GM12878 (cell line): ENCODE measurements at regions of chr18 and their contacts with region 1.

Region 1: DNA sequence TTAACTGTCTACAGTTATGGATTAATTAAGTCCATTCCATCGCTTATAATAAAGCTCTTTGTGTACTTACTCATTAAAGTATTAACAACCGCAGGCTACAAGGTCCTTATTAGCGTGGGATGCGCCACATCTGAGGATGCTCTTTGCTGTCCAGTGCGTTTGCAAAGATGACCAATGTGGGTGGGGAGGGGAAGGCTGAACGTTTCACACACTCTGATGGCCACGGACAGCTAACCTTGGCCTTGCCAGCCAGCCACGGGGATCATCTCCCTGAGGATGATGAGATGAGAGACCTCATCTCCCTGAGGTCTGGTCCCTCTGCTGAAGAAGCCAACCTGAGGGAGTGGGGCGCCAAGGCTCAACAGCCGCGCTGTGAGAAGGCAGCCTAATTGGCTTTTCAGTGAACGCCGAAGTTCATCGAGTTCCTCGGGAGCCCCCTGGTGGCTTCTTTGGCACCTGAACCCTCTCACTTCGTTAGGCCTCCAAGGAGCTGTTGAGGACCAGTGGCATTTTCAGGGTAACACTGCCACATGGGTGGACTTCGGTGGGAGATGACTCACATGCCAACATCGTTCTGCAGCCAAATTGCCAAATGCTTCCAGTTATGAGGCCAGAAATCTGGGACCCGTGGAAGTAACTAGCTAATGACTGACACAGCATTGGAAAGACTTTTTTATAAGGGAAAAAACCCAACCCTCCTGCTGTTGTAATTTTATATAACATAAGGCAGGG is 69.3 kb upstream of the SEC11C start:
- DNase-seq: no peak
- ATAC-seq: peak; percentile 99
- H3K4me3 ChIP-seq: no peak overlapping the region
- H3K27ac ChIP-seq: no peak overlapping the region
- H3K4me1 ChIP-seq: peaks cover 7% of the 10 kb centered on the region
- H3K27me3 ChIP-seq: no peaks in the 10 kb centered on the region
- CTCF ChIP-seq: peak; percentile 81 to 91 (median 91)
- EP300 ChIP-seq: no peak
- POLR2A ChIP-seq: no peak
- RAD21 ChIP-seq: peak; percentile 84

Region 2: DNA sequence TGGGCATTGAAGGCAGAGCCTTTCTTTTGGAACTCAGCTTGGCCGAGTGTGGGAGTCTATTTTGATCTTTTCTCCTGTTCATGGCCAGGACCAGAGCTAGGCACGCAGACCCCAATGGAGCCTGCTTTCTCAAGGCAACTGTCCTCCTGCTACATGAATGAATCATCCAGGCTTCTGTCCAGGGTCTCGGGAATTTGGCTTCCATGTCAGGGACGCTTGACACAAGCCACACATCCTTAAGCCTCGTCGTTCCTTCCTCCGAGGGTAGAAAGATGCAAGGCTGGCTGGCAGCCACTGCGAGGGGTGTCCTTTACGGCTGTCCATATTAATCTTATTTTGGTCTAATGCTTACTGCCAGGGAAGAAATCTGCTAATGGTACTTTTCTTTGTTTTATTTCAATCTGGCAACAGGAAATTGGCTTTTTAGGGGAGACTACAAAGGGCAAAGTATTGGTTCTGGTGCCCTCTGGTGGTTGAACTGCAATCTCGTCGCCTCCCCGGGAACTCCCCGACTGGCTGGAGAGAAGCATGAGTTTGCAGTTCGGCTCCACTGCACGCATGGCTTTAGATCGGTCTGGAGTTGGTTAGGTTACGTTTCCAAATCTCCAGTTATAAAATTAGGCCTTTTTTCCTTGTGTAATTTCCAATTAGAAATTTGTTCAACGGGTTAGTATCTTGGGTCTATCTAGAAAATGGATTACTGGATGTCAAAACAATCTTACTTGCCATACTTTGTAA is 576.7 kb before region 1 on chr18:
- CTCF ChIA-PET with region 1: interaction called, 4 read pairs
- POLR2A ChIA-PET with region 1: no interaction called
- RAD21 ChIA-PET with region 1: no interaction called
- SMC1A ChIA-PET with region 1: no interaction called
- in situ Hi-C with region 1: loop called (anchors 25 kb)
- intact Hi-C with region 1: no loop called
- DNase-seq: peak; percentile 28
- ATAC-seq: peak; percentile 94
- H3K4me3 ChIP-seq: no peak overlapping the region
- H3K27ac ChIP-seq: no peak overlapping the region
- H3K4me1 ChIP-seq: peaks cover 13% of the 10 kb centered on the region
- H3K27me3 ChIP-seq: no peaks in the 10 kb centered on the region
- CTCF ChIP-seq: peak; percentile 75 to 90 (median 85)
- EP300 ChIP-seq: no peak
- POLR2A ChIP-seq: no peak
- RAD21 ChIP-seq: peak; percentile 81

Region 3: DNA sequence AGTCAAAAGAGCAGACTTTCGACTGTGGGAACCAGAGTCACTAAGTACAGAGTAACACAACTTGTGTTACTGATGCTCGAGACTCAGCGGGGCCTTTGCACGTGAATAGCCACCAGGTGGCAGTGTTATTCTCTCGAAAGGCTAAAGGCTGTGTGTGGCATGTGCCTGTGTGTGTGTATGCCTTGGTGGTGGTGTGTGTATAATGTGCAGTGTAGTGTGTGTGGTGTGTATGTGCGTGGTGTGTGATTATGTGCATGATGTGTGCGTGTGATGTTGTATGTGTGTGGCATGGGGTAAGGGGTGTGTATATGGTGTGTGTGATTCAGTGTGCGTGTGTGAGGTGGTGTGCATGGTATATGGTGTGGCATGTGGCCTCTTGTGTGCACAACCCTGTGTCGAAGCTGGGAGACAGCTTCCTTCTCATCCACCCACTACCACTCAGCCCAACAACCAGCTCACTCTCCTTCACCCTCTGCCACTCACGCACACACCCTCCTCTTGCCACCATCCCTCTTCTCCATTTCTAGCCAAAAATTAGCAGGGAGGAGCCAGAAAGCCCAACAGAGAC is 288.6 kb before region 1 on chr18:
- CTCF ChIA-PET with region 1: interaction called, 265 read pairs
- POLR2A ChIA-PET with region 1: no interaction called
- RAD21 ChIA-PET with region 1: interaction called, 12 read pairs
- SMC1A ChIA-PET with region 1: interaction called, 71 read pairs
- in situ Hi-C with region 1: no loop called
- intact Hi-C with region 1: loop called (anchors 1 kb)
- DNase-seq: peak; percentile 57
- ATAC-seq: peak; percentile 99
- H3K4me3 ChIP-seq: no peak overlapping the region
- H3K27ac ChIP-seq: no peak overlapping the region
- H3K4me1 ChIP-seq: no peaks in the 10 kb centered on the region
- H3K27me3 ChIP-seq: no peaks in the 10 kb centered on the region
- CTCF ChIP-seq: peak; percentile 80 to 91 (median 83)
- EP300 ChIP-seq: no peak
- POLR2A ChIP-seq: no peak
- RAD21 ChIP-seq: peak; percentile 93

Region 4: DNA sequence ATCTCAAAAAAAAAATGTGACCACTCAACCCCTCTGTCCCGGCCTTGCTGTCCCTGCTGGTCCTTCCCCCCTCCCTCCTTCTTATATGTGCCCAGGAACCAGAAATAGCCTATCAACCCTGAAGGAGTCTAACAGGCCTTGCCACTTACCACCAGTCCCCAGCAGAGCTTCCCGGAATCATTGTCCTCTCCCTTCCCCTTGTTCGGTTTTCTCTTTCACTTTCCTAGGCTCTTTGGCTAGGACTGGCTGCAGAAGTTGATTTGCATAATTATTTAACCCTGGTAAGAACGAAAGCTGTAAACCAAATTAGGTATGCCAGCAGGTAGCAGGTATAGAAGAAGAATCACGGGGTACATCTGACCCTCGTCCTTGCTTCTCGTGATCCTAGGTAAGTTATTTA is 278.3 kb before region 1 on chr18:
- CTCF ChIA-PET with region 1: interaction called, 89 read pairs
- POLR2A ChIA-PET with region 1: no interaction called
- RAD21 ChIA-PET with region 1: no interaction called
- SMC1A ChIA-PET with region 1: interaction called, 4 read pairs
- in situ Hi-C with region 1: no loop called
- intact Hi-C with region 1: no loop called
- DNase-seq: peak; percentile 57
- ATAC-seq: peak; percentile 90
- H3K4me3 ChIP-seq: no peak overlapping the region
- H3K27ac ChIP-seq: no peak overlapping the region; the same call in 1 of the 2 replicates
- H3K4me1 ChIP-seq: peaks cover 7% of the 10 kb centered on the region
- H3K27me3 ChIP-seq: no peaks in the 10 kb centered on the region
- CTCF ChIP-seq: no peak
- EP300 ChIP-seq: no peak
- POLR2A ChIP-seq: no peak
- RAD21 ChIP-seq: no peak

Region 5: DNA sequence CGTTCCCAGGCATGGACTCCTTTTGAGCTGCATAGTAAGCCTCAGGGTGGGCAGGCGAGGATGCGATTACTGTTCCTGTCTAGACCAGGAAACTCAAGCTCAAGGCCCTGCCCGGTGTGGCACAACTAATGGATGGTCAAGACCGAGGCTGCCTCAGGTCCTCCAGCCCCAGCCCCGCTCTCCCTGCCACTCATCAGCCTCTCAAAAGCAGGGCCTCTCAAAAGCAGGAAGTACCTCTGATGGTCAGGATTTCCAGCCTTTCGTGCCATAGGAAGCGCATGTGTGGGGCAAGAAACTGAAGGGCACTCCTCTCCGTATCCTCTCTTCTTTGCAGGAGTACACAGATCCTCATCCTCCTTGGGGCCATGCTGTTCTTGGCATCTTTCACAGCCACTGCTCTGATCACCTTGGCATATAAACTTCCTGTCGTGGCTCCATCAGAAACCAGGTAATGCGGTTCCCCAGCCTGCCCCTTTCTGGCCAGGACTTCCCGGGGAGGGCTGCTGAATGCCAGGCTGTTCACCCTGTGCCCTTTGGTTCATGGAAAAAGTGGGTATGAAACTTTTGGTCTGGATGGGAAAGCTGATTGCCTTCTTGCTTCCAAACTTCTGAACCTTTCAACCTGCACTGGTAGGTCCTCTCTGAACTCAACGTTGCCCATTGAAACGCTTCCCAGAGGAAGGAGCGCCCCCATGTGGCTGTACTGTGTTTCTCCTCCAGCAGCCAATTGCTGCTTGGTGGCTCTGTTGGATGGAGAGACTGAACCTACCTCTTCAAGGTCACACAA is 13.4 kb before region 1 on chr18:
- CTCF ChIA-PET with region 1: interaction called, 20 read pairs
- POLR2A ChIA-PET with region 1: no interaction called
- RAD21 ChIA-PET with region 1: interaction called, 10 read pairs
- SMC1A ChIA-PET with region 1: interaction called, 6 read pairs
- in situ Hi-C with region 1: no loop called
- intact Hi-C with region 1: no loop called
- DNase-seq: no peak
- ATAC-seq: peak; percentile 98
- H3K4me3 ChIP-seq: no peak overlapping the region
- H3K27ac ChIP-seq: no peak overlapping the region
- H3K4me1 ChIP-seq: no peaks in the 10 kb centered on the region; the same call in 1 of the 2 replicates
- H3K27me3 ChIP-seq: no peaks in the 10 kb centered on the region; a peak in 1 of 4 replicates
- CTCF ChIP-seq: peak; percentile 81 to 92 (median 91)
- EP300 ChIP-seq: no peak
- POLR2A ChIP-seq: no peak
- RAD21 ChIP-seq: peak; percentile 96

Region 6: DNA sequence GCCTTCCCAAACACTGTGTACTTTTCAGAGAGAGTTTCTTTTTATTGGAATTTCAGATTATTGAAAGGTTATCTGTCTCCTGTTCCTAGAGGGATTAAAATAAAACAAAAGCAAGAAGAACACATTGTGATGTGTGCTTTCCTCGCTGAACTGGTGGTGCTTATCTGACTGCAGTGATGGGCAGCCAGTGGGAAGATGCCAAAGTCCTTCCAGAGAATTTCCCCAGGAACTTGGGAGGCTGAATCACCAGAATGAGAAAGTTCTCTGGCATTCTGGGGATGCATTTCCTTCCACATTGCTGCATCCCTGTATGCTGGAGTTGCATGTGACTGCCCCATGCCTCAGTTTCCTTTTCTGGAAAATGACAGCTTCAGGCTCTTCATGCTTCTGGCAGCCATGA is 15.4 kb after region 1 on chr18:
- CTCF ChIA-PET with region 1: interaction called, 47 read pairs
- POLR2A ChIA-PET with region 1: no interaction called
- RAD21 ChIA-PET with region 1: interaction called, 4 read pairs
- SMC1A ChIA-PET with region 1: interaction called, 5 read pairs
- in situ Hi-C with region 1: no loop called
- intact Hi-C with region 1: no loop called
- DNase-seq: no peak
- ATAC-seq: no peak
- H3K4me3 ChIP-seq: no peak overlapping the region
- H3K27ac ChIP-seq: no peak overlapping the region
- H3K4me1 ChIP-seq: peaks cover 4% of the 10 kb centered on the region
- H3K27me3 ChIP-seq: peaks cover 0 to 3% of the 10 kb centered on the region in 2 experiments; a peak in 1 of 4 replicates
- CTCF ChIP-seq: no peak
- EP300 ChIP-seq: no peak
- POLR2A ChIP-seq: no peak
- RAD21 ChIP-seq: no peak

Region 7: DNA sequence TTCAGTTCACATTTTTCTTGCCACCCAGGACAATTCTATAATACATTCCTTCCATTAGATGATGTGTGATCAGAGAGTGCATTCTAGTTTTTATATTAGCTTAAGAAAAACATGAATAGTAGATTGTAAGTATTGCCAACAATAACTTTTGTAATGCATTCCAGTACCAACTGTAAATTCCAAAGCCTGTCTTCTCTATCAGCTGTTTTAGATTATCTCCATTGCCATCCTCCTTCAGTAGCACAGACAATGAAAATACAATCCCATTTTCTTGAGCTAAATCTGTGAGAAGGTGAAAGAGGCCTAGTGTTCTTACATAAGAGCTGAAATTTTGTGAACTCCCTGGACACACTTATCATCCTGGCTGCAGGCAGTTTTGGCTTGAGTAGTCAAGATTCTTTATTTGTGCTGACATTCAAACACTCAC is 523.0 kb after region 1 on chr18:
- CTCF ChIA-PET with region 1: no interaction called
- POLR2A ChIA-PET with region 1: no interaction called
- RAD21 ChIA-PET with region 1: no interaction called
- SMC1A ChIA-PET with region 1: no interaction called
- in situ Hi-C with region 1: no loop called
- intact Hi-C with region 1: no loop called
- DNase-seq: no peak
- ATAC-seq: no peak
- H3K4me3 ChIP-seq: no peak overlapping the region
- H3K27ac ChIP-seq: no peak overlapping the region
- H3K4me1 ChIP-seq: no peaks in the 10 kb centered on the region
- H3K27me3 ChIP-seq: peaks cover 0 to 9% of the 10 kb centered on the region in 2 experiments; a peak in 3 of 4 replicates
- CTCF ChIP-seq: no peak
- EP300 ChIP-seq: no peak
- POLR2A ChIP-seq: no peak
- RAD21 ChIP-seq: no peak